ENCODE measurements at regions of chr4 and their contacts with region 1.

Region 1: GRCh38 chr4:176377780-176378179 is 58.0 kb downstream of the SPCS3 start:
- DNase-seq: no peak
- H3K4me3 ChIP-seq: no peak overlapping the region
- H3K27ac ChIP-seq: no peak overlapping the region
- H3K4me1 ChIP-seq: no peaks in the 10 kb centered on the region
- H3K27me3 ChIP-seq: no peaks in the 10 kb centered on the region
- CTCF ChIP-seq: peak in 4 of 5 experiments; percentile 6 to 23 (median 19)
- EP300 ChIP-seq: no peak
- POLR2A ChIP-seq: no peak

Region 2: DNA sequence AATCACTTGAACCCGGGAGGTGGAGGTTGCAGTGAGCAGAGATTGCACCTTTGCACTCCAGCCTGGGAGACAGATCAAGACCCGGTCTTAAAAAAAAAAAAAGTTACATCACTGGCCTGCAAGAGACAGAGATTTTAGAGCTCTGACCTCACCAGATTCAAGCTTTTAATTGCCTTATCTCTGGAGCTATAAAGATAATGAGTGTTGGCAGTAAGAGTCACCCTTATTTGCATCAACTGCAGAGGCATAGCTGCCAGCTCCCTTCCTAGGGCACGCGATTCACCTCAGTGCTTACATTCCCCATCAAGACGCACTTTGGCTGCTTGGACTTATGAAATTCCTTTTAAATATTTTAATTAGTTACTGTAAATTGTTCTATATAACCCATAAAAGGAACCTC is 169.9 kb before region 1 on chr4:
- in situ Hi-C with region 1: no loop called
- intact Hi-C with region 1: no loop called
- DNase-seq: no peak
- H3K4me3 ChIP-seq: no peak overlapping the region
- H3K27ac ChIP-seq: no peak overlapping the region
- H3K4me1 ChIP-seq: no peaks in the 10 kb centered on the region
- H3K27me3 ChIP-seq: peaks cover 11% of the 10 kb centered on the region
- CTCF ChIP-seq: no peak
- EP300 ChIP-seq: no peak
- POLR2A ChIP-seq: no peak

Region 3: DNA sequence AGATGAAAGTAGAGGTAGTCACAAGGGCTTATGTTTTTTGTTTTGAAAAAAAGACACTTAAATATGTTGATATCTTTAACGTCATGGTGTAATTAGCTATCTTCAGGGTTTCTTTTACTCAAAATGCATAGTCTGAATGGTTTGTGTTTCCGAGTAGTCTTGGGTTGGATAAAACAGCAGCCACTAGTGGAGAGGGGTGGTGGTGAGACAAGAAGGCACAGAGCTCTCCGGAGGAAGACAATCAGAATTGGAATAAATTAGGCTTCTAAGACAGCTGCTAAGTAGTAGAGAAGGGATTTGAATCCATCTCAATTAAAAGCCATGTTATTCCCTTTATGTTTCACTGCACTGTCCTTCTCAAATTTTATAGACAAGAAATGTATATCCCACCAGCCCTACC is 655.4 kb after region 1 on chr4:
- in situ Hi-C with region 1: loop called in 2 of 4 experiments (anchors 10 to 25 kb)
- intact Hi-C with region 1: no loop called
- DNase-seq: no peak
- H3K4me3 ChIP-seq: no peak overlapping the region
- H3K27ac ChIP-seq: no peak overlapping the region
- H3K4me1 ChIP-seq: no peaks in the 10 kb centered on the region
- H3K27me3 ChIP-seq: no peaks in the 10 kb centered on the region
- CTCF ChIP-seq: no peak
- EP300 ChIP-seq: no peak
- POLR2A ChIP-seq: no peak

Region 4: DNA sequence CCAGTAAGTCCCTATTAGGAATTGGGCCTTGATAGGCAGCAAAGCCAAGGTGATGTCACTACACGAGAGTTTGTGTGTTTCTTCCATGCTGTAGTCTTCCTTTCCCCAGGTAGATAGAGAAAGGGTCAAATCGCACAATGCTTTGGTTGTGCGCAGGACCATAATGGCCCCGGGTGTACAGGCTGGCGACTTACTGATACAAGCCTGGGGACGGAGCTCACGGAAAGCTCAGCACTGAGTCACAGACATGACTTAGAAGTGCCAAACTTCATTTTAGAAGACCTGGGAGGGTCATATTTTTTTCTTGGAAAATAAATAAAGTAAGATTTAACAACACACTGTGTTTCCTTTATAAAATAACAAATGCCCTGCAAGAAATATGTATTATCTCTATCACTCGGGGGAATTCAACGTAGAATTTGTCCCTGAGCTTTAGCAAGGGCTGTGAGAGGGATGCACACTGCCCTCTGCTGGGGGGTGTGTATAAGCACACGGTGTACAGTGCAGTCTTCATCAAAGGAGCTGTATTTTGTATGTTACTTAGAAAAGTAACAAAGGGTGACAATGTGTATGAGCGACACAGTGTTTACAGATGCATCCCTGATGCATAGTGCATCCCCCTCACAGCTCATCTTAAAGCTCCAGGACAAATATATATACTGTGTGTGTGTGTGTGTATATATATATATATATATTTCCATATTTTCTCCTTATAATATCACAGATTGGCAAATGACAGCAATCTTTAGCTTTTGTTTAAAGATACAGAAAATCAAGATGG is 669.5 kb after region 1 on chr4:
- in situ Hi-C with region 1: loop called in 2 of 4 experiments (anchors 10 to 25 kb)
- intact Hi-C with region 1: no loop called
- DNase-seq: peak; percentile 53
- H3K4me3 ChIP-seq: no peak overlapping the region
- H3K27ac ChIP-seq: no peak overlapping the region
- H3K4me1 ChIP-seq: no peaks in the 10 kb centered on the region
- H3K27me3 ChIP-seq: no peaks in the 10 kb centered on the region
- CTCF ChIP-seq: peak; percentile 41 to 75 (median 73)
- EP300 ChIP-seq: no peak
- POLR2A ChIP-seq: no peak

Measured in transverse colon (tissue), 4 donors.